BJ (cell line): ENCODE measurements at regions of chr2 and their contacts with region 1.

Region 1: GRCh38 chr2:219206442-219207253 is at the start of gene ZFAND2B:
- DNase-seq: peak; percentile 55
- H3K4me3 ChIP-seq: peak within 1 kb of the TSS; percentile 63
- H3K27me3 ChIP-seq: no peaks in the 10 kb centered on the region
- CTCF ChIP-seq: 0 out of 2 replicates have a peak, but pooled peaks have one; percentile 11
- polyA plus RNA-seq, gene ZFAND2B: 45.6 and 62.9 TPM in 2 replicates

Region 2: DNA sequence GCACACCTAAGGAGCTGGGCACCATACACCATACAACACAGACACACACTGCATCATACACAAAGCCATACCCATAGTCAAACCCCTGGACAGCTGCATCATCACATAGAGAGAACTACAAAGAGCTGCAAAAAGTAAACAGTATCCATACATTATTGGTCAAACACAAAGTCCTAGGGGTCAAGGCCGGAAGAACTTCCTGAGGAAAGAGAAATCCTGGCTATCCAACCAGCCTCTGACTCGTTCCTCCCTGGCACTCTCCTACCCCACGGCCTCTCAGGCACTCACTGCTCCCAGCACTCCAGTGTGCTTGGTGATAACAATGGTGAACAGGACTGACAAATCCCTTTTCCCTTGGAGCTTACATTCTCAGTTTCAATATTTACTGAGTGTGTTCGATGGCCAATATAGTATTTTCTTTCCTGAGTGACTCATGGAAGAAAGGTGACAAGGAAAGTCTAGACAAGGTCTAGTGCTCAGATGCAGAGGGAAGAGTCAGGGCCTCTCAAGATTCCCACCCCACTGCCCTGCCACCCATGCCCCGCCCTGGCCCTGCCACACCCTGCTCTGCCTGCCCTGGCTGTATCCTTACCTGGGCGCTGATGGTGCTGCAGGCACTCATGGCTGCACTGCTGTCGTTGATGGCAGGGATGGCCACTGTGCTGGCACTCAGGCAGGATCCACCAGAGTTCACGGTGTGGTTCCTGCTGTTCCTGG is 168.7 kb before region 1 on chr2:
- CTCF ChIA-PET with region 1: no interaction called
- POLR2A ChIA-PET with region 1: no interaction called
- DNase-seq: no peak
- H3K4me3 ChIP-seq: no peak overlapping the region
- H3K27me3 ChIP-seq: peaks cover 32% of the 10 kb centered on the region
- CTCF ChIP-seq: no peak

Region 3: GRCh38 chr2:219218732-219219701 is 12.4 kb after region 1 on chr2 and contains the start of gene ABCB6:
- CTCF ChIA-PET with region 1: interaction called, 10 read pairs
- POLR2A ChIA-PET with region 1: interaction called, 3 read pairs
- DNase-seq: peak; percentile 54
- H3K4me3 ChIP-seq: peak within 1 kb of the TSS; percentile 43
- H3K27me3 ChIP-seq: no peaks in the 10 kb centered on the region
- CTCF ChIP-seq: no peak
- polyA plus RNA-seq, gene ABCB6: 20.3 and 33.4 TPM in 2 replicates